ENCODE measurements at regions of chr6 and their contacts with region 1.

Region 1: GRCh38 chr6:116799945-116800344 is 28.9 kb downstream of the GPRC6A start:
- DNase-seq: no peak
- ATAC-seq: no peak
- H3K4me3 ChIP-seq: no peak overlapping the region
- H3K27ac ChIP-seq: no peak overlapping the region
- H3K4me1 ChIP-seq: no peaks in the 10 kb centered on the region
- H3K27me3 ChIP-seq: no peaks in the 10 kb centered on the region
- CTCF ChIP-seq: no peak

Region 2: GRCh38 chr6:116615937-116616736 is 183.8 kb before region 1 on chr6 and contains the start of gene RSPH4A:
- CTCF ChIA-PET with region 1: no interaction called
- POLR2A ChIA-PET with region 1: no interaction called
- intact Hi-C with region 1: no loop called
- DNase-seq: peak; percentile 91
- ATAC-seq: peak; percentile 100
- H3K4me3 ChIP-seq: peak within 1 kb of the TSS; percentile 76
- H3K27ac ChIP-seq: no peak within 1 kb of the TSS
- H3K4me1 ChIP-seq: no peaks in the 10 kb centered on the region; the same call in 1 of the 2 replicates
- H3K27me3 ChIP-seq: no peaks in the 10 kb centered on the region
- CTCF ChIP-seq: peak; percentile 33; the same call in 1 of the 2 replicates
- total RNA-seq, gene RSPH4A: 0.04 TPM in 1 of 2 replicates, not detected in the other

Region 3: DNA sequence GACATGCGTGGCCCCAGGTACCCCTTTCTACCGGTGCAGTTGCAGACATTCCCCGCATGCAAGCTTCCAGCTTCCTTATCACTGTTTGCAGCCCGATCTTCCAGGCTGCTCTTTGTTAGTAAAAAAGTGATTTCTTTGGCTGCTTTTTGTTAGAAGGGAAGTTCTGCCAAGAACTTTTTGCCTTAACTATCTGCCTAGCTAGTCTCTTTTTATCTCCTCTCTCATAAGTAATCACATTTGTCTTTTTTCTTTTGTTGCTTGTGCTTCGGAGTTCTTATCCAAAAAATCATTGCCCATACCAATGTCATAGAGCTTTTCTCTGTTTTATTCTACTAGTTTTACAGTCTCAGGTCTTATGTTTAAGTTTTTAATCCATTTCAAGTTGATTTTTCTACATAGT is 54.8 kb before region 1 on chr6:
- CTCF ChIA-PET with region 1: no interaction called
- POLR2A ChIA-PET with region 1: no interaction called
- intact Hi-C with region 1: no loop called
- DNase-seq: no peak
- ATAC-seq: no peak
- H3K4me3 ChIP-seq: no peak overlapping the region
- H3K27ac ChIP-seq: no peak overlapping the region
- H3K4me1 ChIP-seq: no peaks in the 10 kb centered on the region
- H3K27me3 ChIP-seq: no peaks in the 10 kb centered on the region
- CTCF ChIP-seq: no peak

Region 4: GRCh38 chr6:116866281-116866871 is 66.4 kb after region 1 on chr6:
- CTCF ChIA-PET with region 1: no interaction called
- POLR2A ChIA-PET with region 1: no interaction called
- intact Hi-C with region 1: loop called (anchors 2 kb)
- DNase-seq: no peak
- ATAC-seq: no peak
- H3K4me3 ChIP-seq: no peak overlapping the region
- H3K27ac ChIP-seq: no peak overlapping the region
- H3K4me1 ChIP-seq: no peaks in the 10 kb centered on the region; the same call in 1 of the 2 replicates
- H3K27me3 ChIP-seq: no peaks in the 10 kb centered on the region
- CTCF ChIP-seq: no peak